Activated T-helper 2 cell treated with anti-CD3 and anti-CD28 coated beads, Interferon-gamma antibody, Interleukin-2, Interleukin-4, amounts not matched to agents 10 μg/mL and 5 μg/mL and 100 μg/mL, durations not matched to agents 14 hours and 24 hours and 36 hours (primary cell): ENCODE measurements at regions of chr5 and their contacts with region 1.

Region 1: DNA sequence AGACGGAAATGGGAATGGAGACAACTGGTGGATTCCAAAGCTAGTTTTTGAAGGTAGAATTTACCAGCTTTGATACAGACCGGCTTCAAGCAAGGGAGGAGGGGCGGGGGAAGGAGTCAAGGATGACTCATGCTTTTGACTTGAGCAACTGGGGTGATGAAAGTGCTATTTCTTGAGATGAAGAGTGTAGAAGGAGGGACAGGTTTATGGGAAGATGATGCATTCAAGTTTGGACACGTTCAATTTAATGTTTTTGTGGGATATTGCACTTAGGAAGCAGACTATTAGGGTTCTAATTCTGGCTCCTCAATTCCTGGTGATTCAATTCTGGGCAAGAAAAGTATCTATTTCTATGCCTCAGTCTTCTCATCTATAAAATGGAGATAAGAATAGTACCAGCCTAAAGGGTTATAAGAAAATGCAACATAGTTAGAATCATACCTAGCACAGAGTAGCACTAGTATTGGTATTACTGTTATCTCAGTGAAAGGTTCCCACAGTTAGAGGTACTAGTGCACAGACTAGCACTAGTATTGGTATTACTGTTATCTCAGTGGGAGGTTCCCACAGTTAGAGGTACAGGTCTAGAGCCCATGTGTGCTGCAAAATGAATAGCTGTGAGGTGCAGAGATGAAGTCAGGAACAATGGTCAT is 4.6 kb downstream of the NIPAL4 start:
- DNase-seq: peak; percentile 43
- H3K4me3 Mint-ChIP-seq: no peak overlapping the region
- H3K27ac Mint-ChIP-seq: peak overlapping the region; percentile 82
- H3K4me1 Mint-ChIP-seq: peaks cover 32% of the 10 kb centered on the region
- H3K27me3 Mint-ChIP-seq: peaks cover 17% of the 10 kb centered on the region

Region 2: DNA sequence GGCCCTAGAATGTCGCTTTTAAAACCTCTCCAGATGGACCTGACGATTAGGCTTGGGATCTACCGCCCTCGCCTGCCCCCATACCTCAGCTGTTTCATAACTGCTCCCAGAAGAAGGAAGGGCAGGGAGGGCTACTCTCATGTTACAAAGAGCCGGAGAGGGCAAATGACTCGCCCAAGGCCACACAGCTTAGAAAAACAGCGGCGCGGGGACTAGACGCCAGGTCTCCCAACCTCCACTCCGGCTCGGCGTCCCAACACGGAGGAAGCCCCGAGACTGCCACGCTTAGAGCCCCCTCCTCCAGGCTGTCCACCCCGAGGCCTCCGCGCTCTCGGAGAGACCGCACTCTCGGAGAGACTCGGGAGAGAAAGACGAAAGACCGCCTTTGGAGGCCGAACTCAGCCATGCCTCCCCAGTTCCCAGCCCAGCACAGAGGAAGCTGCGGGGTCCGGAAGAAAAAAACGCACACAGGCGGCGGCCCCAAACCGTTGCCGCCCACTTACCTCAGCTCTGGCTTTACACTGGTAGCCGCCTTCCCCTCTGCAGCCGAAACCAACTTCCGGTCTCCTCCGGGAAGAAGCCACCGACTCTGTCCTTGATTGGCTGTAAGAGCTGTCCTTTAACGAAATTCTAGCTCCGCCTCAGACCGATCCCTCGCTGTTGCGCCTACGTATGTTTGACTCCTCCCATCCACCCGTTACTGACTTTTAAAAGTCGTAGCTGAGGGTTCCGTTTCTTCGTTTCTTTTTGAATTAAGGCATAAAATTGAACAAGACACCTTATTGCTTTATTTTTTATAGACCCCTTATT is 322.1 kb before region 1 on chr5 and contains the start of gene MED7:
- intact Hi-C with region 1: loop called (anchors 10 kb)
- DNase-seq: peak; percentile 95
- H3K4me3 Mint-ChIP-seq: peak within 1 kb of the TSS; percentile 97
- H3K27ac Mint-ChIP-seq: peak within 1 kb of the TSS; percentile 97
- H3K4me1 Mint-ChIP-seq: peaks cover 31% of the 10 kb centered on the region
- H3K27me3 Mint-ChIP-seq: no peaks in the 10 kb centered on the region
- total RNA-seq, gene MED7: 12.5 and 13.1 TPM in 2 replicates

Region 3: GRCh38 chr5:157290981-157291711 is 173.5 kb before region 1 on chr5:
- intact Hi-C with region 1: no loop called
- DNase-seq: no peak
- H3K4me3 Mint-ChIP-seq: no peak overlapping the region
- H3K27ac Mint-ChIP-seq: peak overlapping the region; percentile 83
- H3K4me1 Mint-ChIP-seq: peaks cover 58% of the 10 kb centered on the region
- H3K27me3 Mint-ChIP-seq: no peaks in the 10 kb centered on the region

Region 4: DNA sequence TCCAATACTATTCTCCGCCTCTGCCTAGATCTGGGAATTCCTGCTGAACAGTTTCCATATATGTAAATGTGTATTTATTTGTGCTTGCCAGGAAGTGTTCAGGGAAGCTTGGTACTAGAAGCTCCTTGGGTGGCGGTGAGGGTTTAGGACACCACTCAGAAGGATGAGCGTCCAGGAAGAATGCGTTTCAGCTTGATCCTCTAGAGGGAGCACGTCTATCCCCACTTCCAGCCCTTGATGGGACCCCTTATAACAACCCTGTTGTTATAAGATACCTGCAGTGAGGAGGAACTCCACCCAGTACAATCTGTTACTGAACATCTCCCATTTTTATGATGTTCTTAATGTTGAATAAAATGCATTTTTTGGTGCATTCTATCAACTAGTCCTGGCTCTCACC is 109.8 kb before region 1 on chr5:
- intact Hi-C with region 1: loop called (anchors 1 kb)
- DNase-seq: no peak
- H3K4me3 Mint-ChIP-seq: no peak overlapping the region
- H3K27ac Mint-ChIP-seq: no peak overlapping the region
- H3K4me1 Mint-ChIP-seq: peaks cover 35% of the 10 kb centered on the region
- H3K27me3 Mint-ChIP-seq: no peaks in the 10 kb centered on the region

Region 5: GRCh38 chr5:157390551-157391297 is 73.9 kb before region 1 on chr5:
- intact Hi-C with region 1: loop called (anchors 5 kb)
- DNase-seq: peak; percentile 42
- H3K4me3 Mint-ChIP-seq: no peak overlapping the region
- H3K27ac Mint-ChIP-seq: peak overlapping the region; percentile 96
- H3K4me1 Mint-ChIP-seq: peaks cover 16% of the 10 kb centered on the region
- H3K27me3 Mint-ChIP-seq: no peaks in the 10 kb centered on the region

Region 6: GRCh38 chr5:157431544-157432200 is 33.0 kb before region 1 on chr5:
- intact Hi-C with region 1: loop called (anchors 2 kb)
- DNase-seq: peak; percentile 20
- H3K4me3 Mint-ChIP-seq: no peak overlapping the region
- H3K27ac Mint-ChIP-seq: no peak overlapping the region
- H3K4me1 Mint-ChIP-seq: peaks cover 12% of the 10 kb centered on the region
- H3K27me3 Mint-ChIP-seq: peaks cover 28% of the 10 kb centered on the region

Region 7: DNA sequence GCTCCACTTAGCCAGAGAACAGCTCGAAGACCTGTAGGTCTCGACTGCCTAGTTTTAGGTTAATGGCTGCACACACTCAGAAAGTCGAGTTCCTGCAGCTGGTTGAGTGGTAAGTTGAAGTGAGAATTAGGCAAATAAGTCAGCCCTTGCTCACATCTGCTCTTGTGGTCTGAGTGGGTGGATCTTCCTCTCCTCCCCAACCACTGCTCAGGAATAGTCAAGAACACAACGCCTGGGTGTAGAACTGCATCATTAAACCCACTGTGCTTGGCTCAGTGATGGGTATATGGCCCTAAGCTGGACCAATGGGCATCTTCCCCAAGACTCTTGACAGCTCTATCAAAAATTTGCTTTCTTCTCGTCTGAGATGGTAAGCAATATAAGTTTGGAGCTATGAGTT is 131.8 kb after region 1 on chr5:
- intact Hi-C with region 1: loop called (anchors 1 kb)
- DNase-seq: peak; percentile 49
- H3K4me3 Mint-ChIP-seq: no peak overlapping the region
- H3K27ac Mint-ChIP-seq: peak overlapping the region; percentile 21
- H3K4me1 Mint-ChIP-seq: peaks cover 90% of the 10 kb centered on the region
- H3K27me3 Mint-ChIP-seq: no peaks in the 10 kb centered on the region

Region 8: GRCh38 chr5:157731272-157732129 is 266.9 kb after region 1 on chr5 and contains the start of gene THG1L:
- intact Hi-C with region 1: loop called (anchors 2 kb)
- DNase-seq: peak; percentile 97
- H3K4me3 Mint-ChIP-seq: peak within 1 kb of the TSS; percentile 90
- H3K27ac Mint-ChIP-seq: peak within 1 kb of the TSS; percentile 95
- H3K4me1 Mint-ChIP-seq: peaks cover 26% of the 10 kb centered on the region
- H3K27me3 Mint-ChIP-seq: no peaks in the 10 kb centered on the region
- total RNA-seq, gene THG1L: 28.8 and 29.3 TPM in 2 replicates